Cardiac septum (tissue), 1 donor: ENCODE measurements at regions of chr3 and their contacts with region 1.

Region 1: DNA sequence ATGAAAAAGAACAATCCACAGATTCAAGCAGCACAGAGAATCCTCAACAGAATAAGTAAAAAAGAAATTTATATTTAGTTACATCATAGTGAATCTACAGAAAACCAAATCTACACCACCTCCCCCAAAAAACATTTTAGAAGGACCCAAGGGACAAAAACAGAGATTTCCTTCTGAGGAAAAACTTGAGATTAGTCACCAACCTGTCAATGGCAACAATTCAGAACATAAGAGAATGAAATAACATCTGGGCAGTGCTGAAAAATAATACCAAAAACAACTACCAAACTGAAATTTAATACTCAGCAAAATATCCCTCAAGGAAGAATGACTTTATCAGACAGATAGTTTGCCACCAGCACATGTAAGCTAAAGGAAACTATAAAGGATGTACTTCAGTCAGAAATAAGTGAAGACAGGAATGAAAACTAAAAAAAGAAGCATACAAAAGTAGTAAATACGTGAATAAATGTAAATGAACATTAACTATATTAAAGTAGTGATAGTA is 260.7 kb downstream of the ULK4 start:
- DNase-seq: no peak

Region 2: DNA sequence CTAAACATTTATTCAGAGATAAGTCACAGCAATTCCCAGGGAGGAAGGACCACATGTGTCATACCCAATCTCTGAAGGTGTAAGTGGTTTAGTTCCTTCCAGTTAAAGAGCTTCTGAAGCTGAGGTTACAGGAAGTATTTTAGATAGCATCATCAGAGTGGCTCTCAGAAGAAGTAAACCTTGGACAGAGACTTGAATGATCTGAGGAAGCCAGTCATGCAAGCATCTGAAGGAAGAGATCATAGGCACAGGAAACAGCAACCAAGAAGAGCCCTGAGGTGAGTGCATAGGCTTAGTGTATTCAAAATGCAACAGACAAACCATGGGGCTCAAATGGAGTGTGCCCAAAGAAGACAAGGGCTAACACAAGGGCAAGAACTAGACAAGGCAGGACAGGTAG is 50.4 kb after region 1 on chr3:
- intact Hi-C with region 1: no loop called
- DNase-seq: no peak

Region 3: GRCh38 chr3:42130329-42131070 is 429.3 kb after region 1 on chr3:
- intact Hi-C with region 1: loop called (anchors 10 kb)
- DNase-seq: no peak